Activated CD4-positive, alpha-beta T cell treated with anti-CD3 and anti-CD28 coated beads for 36 hours (primary cell): ENCODE measurements at regions of chr2 and their contacts with region 1.

Region 1: DNA sequence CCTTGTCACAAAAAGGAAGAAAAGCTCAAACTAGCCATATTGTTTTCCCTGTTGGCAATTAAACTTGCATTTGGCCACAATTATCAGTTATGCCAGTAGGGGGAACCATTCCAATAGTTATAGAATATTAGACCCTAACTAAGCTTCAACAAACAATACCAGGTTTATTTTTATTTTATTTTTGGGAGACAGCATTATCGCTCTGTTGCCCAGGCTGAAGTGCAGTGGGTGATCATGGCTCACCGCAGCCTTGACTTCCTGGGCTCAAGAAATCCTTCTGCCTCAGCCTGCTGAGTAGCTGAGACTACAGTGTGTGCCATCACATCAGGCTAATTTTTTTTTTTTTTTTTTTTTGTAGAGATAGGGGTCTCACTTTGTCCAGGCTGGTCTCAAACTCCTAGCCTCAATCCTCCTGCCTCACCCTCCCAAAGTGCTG is 102.1 kb downstream of the ATAD2B start:
- DNase-seq: peak; percentile 17
- ATAC-seq: peak; percentile 60
- H3K4me3 Mint-ChIP-seq: no peak overlapping the region
- H3K27ac Mint-ChIP-seq: no peak overlapping the region
- H3K4me1 Mint-ChIP-seq: peaks cover 3% of the 10 kb centered on the region
- H3K27me3 Mint-ChIP-seq: no peaks in the 10 kb centered on the region

Region 2: DNA sequence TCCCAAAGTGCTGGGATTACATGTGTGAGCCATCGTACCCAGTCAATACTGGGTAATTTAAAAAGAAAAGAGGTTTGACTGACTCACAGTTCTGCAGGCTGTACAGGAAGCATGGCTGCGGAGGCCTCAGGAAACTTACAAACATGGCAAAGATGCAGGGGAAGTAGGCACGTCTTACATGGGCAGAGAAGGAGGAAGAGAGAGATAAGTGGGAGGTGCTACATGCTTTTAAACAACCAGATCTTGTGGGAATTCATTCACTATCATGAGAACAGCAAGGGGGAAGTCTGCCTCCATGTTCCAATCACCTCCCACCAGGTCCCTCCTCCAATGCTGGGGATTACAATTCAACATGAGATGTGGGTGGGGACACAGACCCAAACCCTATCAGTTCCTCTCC is 90.4 kb before region 1 on chr2:
- CTCF ChIA-PET with region 1: no interaction called
- POLR2A ChIA-PET with region 1: no interaction called
- intact Hi-C with region 1: no loop called
- DNase-seq: no peak
- ATAC-seq: no peak
- H3K4me3 Mint-ChIP-seq: no peak overlapping the region
- H3K27ac Mint-ChIP-seq: no peak overlapping the region
- H3K4me1 Mint-ChIP-seq: no peaks in the 10 kb centered on the region
- H3K27me3 Mint-ChIP-seq: no peaks in the 10 kb centered on the region

Region 3: GRCh38 chr2:23835988-23836387 is 11.2 kb after region 1 on chr2:
- CTCF ChIA-PET with region 1: interaction called, 20 read pairs
- POLR2A ChIA-PET with region 1: no interaction called
- intact Hi-C with region 1: no loop called
- DNase-seq: no peak
- ATAC-seq: no peak
- H3K4me3 Mint-ChIP-seq: no peak overlapping the region
- H3K27ac Mint-ChIP-seq: no peak overlapping the region
- H3K4me1 Mint-ChIP-seq: no peaks in the 10 kb centered on the region
- H3K27me3 Mint-ChIP-seq: no peaks in the 10 kb centered on the region

Region 4: GRCh38 chr2:24382363-24383073 is 557.7 kb after region 1 on chr2:
- CTCF ChIA-PET with region 1: no interaction called
- POLR2A ChIA-PET with region 1: no interaction called
- intact Hi-C with region 1: loop called in 1 of 2 experiments (anchors 10 kb)
- DNase-seq: peak; percentile 74
- ATAC-seq: peak; percentile 97
- H3K4me3 Mint-ChIP-seq: no peak overlapping the region
- H3K27ac Mint-ChIP-seq: no peak overlapping the region
- H3K4me1 Mint-ChIP-seq: no peaks in the 10 kb centered on the region
- H3K27me3 Mint-ChIP-seq: no peaks in the 10 kb centered on the region